ENCODE measurements at regions of chr16 and their contacts with region 1.

Region 1: DNA sequence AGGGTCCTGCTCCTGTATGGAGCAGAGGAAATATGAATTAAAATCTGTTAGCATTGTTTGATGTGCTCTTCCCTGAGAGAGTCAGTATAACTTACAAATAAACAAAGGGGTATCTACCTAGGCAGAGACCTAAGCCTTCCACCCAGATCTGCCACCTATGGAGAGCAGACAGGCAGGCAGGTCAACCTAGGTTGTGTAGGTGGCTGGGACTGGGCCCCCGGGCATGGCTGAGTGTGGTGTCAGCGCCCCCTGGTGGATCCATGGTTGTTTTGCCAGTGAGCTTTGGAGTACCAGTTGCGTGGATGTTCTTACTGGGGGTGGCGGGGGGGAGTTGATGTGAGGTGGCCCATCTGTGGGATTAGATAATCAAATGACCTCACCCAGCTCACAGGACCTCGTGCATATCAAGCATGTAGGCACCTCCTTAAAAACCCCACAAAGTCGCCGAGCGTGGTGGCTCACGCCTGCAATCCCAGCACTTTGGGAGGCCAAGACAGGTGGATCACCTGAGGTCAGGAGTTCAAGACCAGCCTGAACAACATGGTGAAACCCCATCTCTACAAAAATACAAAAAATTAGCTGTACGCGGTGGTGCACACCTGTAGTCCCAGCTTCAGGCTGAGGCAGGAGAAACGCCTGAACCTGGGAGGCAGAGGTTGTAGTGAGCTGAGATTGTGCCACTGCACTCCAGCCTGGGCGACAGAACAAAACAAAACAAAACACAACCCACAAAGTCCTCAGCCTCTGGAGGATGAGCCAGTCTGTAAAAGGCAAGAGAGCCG is 17.6 kb downstream of the DUS2 start:
- DNase-seq: peak; percentile 75
- H3K4me3 ChIP-seq: no peak overlapping the region
- H3K27ac ChIP-seq: no peak overlapping the region
- H3K4me1 ChIP-seq: no peaks in the 10 kb centered on the region
- H3K27me3 ChIP-seq: no peaks in the 10 kb centered on the region
- CTCF ChIP-seq: peak; percentile 79 to 88
- POLR2A ChIP-seq: no peak

Region 2: GRCh38 chr16:67883872-67884261 is 156.8 kb before region 1 on chr16:
- CTCF ChIA-PET with region 1: interaction called, 38 read pairs
- POLR2A ChIA-PET with region 1: no interaction called
- dilution Hi-C with region 1: no loop called
- intact Hi-C with region 1: loop called (anchors 1 kb)
- DNase-seq: peak; percentile 48
- H3K4me3 ChIP-seq: no peak overlapping the region
- H3K27ac ChIP-seq: no peak overlapping the region
- H3K4me1 ChIP-seq: no peaks in the 10 kb centered on the region
- H3K27me3 ChIP-seq: no peaks in the 10 kb centered on the region
- CTCF ChIP-seq: peak; percentile 81 to 94
- POLR2A ChIP-seq: no peak

Region 3: GRCh38 chr16:67907397-67908180 is 133.1 kb before region 1 on chr16:
- CTCF ChIA-PET with region 1: no interaction called
- POLR2A ChIA-PET with region 1: no interaction called
- dilution Hi-C with region 1: no loop called
- intact Hi-C with region 1: no loop called
- DNase-seq: no peak
- H3K4me3 ChIP-seq: no peak overlapping the region
- H3K27ac ChIP-seq: no peak overlapping the region
- H3K4me1 ChIP-seq: peaks cover 5% of the 10 kb centered on the region
- H3K27me3 ChIP-seq: no peaks in the 10 kb centered on the region
- CTCF ChIP-seq: no peak
- POLR2A ChIP-seq: no peak

Region 4: DNA sequence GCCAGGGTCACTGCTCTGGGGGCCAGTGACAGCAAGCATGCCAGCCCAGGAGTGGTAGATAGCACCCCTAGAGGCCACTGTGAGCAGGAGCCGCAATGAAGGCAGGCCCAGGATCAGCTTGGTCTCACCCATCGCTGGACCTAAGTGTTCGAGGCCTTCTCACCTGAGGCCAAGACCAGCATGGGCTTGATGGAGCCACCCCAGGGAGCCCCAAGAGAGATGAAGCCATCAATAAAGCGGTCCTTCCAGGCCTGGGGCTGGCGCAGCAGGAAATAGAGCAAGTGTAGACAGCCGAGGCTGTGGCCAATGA is 98.5 kb before region 1 on chr16:
- CTCF ChIA-PET with region 1: interaction called, 17 read pairs
- POLR2A ChIA-PET with region 1: no interaction called
- dilution Hi-C with region 1: no loop called
- intact Hi-C with region 1: loop called (anchors 2 kb)
- DNase-seq: peak; percentile 35
- H3K4me3 ChIP-seq: no peak overlapping the region
- H3K27ac ChIP-seq: no peak overlapping the region
- H3K4me1 ChIP-seq: peaks cover 1% of the 10 kb centered on the region
- H3K27me3 ChIP-seq: no peaks in the 10 kb centered on the region
- CTCF ChIP-seq: peak; percentile 66 to 82
- POLR2A ChIP-seq: no peak

Region 5: DNA sequence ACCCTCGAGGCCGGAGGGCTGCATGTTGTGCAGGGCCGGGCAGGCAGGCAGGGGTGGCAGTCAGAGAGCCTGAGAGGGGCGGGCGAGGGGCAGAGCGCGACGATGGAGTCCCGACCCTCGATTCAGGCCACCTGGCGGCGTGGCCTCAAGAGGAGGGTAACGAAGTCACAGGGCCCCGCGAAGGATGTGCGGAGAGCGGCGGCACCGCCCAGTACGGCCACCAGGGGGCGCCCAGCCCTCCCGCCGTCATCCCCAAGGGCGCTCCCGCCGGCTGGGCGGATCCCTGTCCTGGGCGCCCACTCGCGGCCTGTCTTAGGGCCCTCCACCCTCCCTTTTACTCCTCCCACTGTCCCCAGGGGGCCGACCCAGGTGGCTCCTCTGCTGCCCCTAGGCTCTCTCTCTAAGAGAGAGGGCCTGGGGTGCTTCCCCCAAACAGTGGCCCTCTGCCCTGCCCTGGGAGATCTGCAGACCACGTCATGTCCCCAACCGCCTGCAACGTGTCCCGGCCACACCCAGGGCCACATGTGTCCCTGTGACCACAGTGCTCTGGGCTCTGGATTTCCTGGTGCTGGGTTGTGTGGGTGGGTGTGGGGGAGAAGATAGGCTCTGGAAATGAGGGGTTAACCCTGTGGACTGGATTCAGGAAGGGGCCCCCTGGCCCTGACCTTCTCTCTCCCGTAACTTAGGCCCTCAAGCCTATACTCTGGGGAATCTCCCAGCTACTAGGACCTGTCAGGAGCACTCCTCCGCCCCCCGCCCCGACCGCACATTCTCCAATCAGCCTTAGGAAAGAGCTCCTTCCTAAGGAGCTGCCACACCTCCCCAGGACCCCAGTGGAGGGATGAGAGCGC is 47.3 kb before region 1 on chr16:
- CTCF ChIA-PET with region 1: interaction called, 52 read pairs
- POLR2A ChIA-PET with region 1: no interaction called
- dilution Hi-C with region 1: no loop called
- intact Hi-C with region 1: loop called (anchors 1 kb)
- DNase-seq: peak; percentile 71
- H3K4me3 ChIP-seq: no peak overlapping the region
- H3K27ac ChIP-seq: peak overlapping the region; percentile 9
- H3K4me1 ChIP-seq: peaks cover 4% of the 10 kb centered on the region
- H3K27me3 ChIP-seq: no peaks in the 10 kb centered on the region
- CTCF ChIP-seq: peak; percentile 99
- POLR2A ChIP-seq: no peak

Region 6: GRCh38 chr16:68022704-68023522 is 17.8 kb before region 1 on chr16 and contains the starts of genes DDX28 and DUS2:
- CTCF ChIA-PET with region 1: interaction called, 28 read pairs
- POLR2A ChIA-PET with region 1: no interaction called
- dilution Hi-C with region 1: no loop called
- intact Hi-C with region 1: no loop called
- DNase-seq: peak; percentile 95
- H3K4me3 ChIP-seq: peak within 1 kb of the TSS; percentile 84 to 94 (median 92)
- H3K27ac ChIP-seq: peak within 1 kb of the TSS; percentile 56
- H3K4me1 ChIP-seq: peaks cover 14% of the 10 kb centered on the region
- H3K27me3 ChIP-seq: no peaks in the 10 kb centered on the region
- CTCF ChIP-seq: no peak
- POLR2A ChIP-seq: peak; percentile 82
- total RNA-seq, gene DDX28: 7.9 and 8.4 TPM in 2 replicates
- total RNA-seq, gene DUS2: 20.3 and 21.7 TPM in 2 replicates

Region 7: DNA sequence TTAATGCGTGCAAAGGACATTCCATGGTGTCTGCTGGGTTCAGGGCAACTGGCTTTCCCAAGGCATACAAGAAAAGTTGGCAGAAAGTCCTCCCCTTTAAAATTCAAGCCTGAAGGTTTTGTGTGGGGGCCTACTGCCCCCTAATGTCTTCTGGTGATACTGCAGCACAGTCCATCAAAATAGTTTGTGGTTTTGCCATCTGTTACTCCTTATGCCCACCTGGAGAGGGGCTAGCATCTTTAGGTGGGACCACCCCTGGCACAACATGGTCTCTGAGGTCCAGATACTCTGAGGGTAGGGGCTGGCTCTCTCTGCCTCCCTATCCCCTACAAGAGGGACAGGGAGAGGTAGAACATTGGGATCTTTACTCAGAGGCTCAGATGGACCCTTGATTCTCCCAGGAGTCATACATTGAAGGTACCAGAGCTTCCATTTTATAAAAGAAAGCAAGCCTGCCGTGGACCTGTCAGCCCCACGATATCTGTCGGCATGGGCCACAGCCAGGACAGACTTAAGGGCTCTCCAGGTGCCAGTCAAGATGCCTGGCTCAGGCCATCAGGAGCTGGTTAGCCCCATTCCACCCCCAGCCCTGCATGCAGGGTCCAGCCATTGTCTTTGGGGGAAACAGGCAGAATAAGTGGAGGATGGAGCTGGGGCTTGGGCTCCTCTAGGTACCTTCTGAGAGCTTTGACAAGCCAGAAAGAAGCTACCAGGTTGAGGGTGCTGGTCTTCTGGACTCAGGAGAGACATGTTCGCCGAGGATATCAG is 188.9 kb after region 1 on chr16:
- CTCF ChIA-PET with region 1: interaction called, 10 read pairs
- POLR2A ChIA-PET with region 1: no interaction called
- dilution Hi-C with region 1: no loop called
- intact Hi-C with region 1: loop called (anchors 2 kb)
- DNase-seq: peak; percentile 66
- H3K4me3 ChIP-seq: no peak overlapping the region
- H3K27ac ChIP-seq: no peak overlapping the region
- H3K4me1 ChIP-seq: no peaks in the 10 kb centered on the region
- H3K27me3 ChIP-seq: no peaks in the 10 kb centered on the region
- CTCF ChIP-seq: peak; percentile 83
- POLR2A ChIP-seq: no peak

Region 8: DNA sequence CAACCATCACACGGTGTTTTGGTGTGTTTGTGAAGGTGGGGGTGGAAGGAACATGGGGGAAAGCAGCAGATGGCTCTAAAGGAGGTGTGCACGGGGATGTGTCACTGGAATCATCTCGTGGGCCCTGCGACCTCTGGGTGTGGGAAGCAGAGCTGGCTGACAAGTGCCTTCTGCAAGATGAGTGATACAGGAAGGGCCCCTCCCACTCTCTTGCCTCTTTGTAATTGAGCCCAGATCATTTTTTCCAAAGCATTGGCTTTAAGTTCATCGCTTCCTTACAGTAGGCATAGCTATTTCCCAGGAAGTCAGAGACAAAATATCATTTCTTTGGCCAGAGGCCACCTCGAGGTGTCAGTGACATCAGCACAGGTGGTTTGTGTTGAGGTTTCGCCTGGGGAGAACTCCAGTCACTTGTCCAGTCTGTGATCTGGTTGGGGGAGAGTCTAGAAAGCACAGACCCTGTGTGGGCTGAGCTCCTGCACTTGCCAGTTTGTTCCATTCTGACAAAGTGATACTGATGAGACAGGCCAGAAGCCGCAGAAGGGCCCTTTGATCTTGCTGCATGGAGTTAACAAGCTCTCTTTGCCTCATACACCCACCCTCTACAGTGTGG is 1125.6 kb after region 1 on chr16:
- CTCF ChIA-PET with region 1: no interaction called
- POLR2A ChIA-PET with region 1: no interaction called
- dilution Hi-C with region 1: no loop called
- intact Hi-C with region 1: no loop called
- DNase-seq: peak; percentile 49
- H3K4me3 ChIP-seq: no peak overlapping the region
- H3K27ac ChIP-seq: peak overlapping the region; percentile 43
- H3K4me1 ChIP-seq: peaks cover 39% of the 10 kb centered on the region
- H3K27me3 ChIP-seq: no peaks in the 10 kb centered on the region
- CTCF ChIP-seq: no peak
- POLR2A ChIP-seq: no peak

Measured in endothelial cell of umbilical vein (primary cell).